Activated T-helper 1 cell treated with anti-CD3 and anti-CD28 coated beads, Interleukin-12 subunit alpha, Interleukin-12 subunit beta, Interleukin-2, Interleukin-4 antibody, amounts not matched to agents 30 ng/mL and 10 ng/mL and 1 ng/mL, durations not matched to agents 14 hours and 24 hours and 36 hours (primary cell): ENCODE measurements at regions of chr10 and their contacts with region 1.

Region 1: DNA sequence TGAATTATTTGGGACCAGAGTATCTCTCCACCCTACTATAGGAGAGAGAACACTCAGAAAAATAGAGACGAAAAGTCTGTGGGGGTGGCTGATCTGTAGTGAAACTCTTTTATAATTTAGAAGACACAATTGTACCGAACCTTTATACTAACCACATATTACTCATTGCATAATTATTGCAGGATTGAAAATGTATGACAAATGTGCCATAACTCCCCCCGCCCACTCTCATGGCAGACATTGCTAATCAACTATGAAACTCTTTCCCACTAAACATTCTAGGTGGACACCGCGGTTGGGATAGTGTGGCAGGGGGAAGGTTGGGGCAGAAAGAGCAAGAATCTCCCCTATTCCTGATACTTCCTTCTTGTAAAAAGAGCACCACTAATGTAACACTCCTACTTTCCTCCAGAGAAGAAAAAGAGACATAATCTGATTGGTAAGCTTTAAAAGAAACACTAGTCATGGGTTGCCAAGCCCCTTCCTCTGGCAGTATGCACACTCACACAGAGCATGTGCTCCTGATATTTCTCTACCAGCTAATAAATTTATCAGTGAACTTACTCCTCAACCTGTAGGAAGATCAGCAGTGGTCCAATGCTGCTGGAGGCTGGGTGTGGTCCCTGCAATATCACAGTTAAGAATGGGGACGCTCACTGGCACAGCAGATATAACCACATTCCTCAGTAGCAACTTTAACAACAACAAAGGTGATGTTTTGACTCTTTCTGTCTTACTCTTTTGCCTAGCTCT is 18.7 kb upstream of the ARID5B start:
- DNase-seq: no peak
- H3K4me3 Mint-ChIP-seq: no peak overlapping the region
- H3K27ac Mint-ChIP-seq: peak overlapping the region; percentile 44
- H3K4me1 Mint-ChIP-seq: peaks cover 19% of the 10 kb centered on the region
- H3K27me3 Mint-ChIP-seq: peaks cover 1% of the 10 kb centered on the region

Region 2: GRCh38 chr10:61750929-61751471 is 131.8 kb before region 1 on chr10:
- intact Hi-C with region 1: loop called (anchors 5 kb)
- DNase-seq: peak; percentile 53
- H3K4me3 Mint-ChIP-seq: no peak overlapping the region
- H3K27ac Mint-ChIP-seq: peak overlapping the region; percentile 35
- H3K4me1 Mint-ChIP-seq: peaks cover 23% of the 10 kb centered on the region
- H3K27me3 Mint-ChIP-seq: no peaks in the 10 kb centered on the region

Region 3: GRCh38 chr10:61765176-61766087 is 117.4 kb before region 1 on chr10:
- intact Hi-C with region 1: no loop called
- DNase-seq: no peak
- H3K4me3 Mint-ChIP-seq: no peak overlapping the region
- H3K27ac Mint-ChIP-seq: peak overlapping the region; percentile 18
- H3K4me1 Mint-ChIP-seq: peaks cover 16% of the 10 kb centered on the region
- H3K27me3 Mint-ChIP-seq: no peaks in the 10 kb centered on the region

Region 4: DNA sequence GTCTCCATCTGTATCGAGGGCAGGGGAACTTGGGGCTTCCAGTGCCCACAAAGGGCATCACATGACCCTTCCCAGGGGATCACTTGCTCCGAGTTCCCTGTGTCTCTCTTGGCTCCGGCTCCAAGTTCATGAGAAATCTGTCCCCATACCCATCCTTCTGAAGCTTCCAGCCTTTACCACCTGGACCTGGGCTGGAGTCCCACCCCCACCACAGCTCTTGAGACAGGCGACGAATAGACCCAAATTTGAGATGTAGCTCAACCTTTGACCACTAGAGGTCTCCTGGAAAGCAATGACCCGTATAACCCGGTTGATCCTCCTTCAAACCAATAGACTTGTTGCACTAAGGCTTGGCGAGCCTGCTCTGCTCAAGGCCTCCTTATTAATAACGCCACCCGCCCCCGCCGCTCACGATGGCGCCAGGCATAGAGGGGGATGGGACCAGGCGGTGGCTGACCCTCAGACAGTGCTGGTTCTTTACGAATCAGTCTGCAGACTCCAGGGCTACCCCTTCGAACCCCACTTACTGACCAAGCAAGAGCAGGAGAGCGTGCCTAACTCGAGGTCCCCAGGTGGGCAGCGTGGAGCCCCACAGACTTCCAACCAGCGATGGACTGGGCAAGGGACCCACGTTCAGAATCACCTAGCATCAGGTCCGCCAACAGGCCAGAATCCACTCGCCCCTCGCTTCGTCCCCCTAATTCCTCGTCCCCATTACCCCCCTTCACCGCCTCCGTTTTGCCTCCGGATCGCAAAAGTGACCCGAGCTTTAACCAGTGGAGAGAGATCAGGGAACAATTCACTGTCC is 14.3 kb after region 1 on chr10:
- intact Hi-C with region 1: loop called (anchors 1 kb)
- DNase-seq: peak; percentile 56
- H3K4me3 Mint-ChIP-seq: peak overlapping the region; percentile 87
- H3K27ac Mint-ChIP-seq: peak overlapping the region; percentile 90
- H3K4me1 Mint-ChIP-seq: peaks cover 38% of the 10 kb centered on the region
- H3K27me3 Mint-ChIP-seq: peaks cover 3% of the 10 kb centered on the region

Region 5: DNA sequence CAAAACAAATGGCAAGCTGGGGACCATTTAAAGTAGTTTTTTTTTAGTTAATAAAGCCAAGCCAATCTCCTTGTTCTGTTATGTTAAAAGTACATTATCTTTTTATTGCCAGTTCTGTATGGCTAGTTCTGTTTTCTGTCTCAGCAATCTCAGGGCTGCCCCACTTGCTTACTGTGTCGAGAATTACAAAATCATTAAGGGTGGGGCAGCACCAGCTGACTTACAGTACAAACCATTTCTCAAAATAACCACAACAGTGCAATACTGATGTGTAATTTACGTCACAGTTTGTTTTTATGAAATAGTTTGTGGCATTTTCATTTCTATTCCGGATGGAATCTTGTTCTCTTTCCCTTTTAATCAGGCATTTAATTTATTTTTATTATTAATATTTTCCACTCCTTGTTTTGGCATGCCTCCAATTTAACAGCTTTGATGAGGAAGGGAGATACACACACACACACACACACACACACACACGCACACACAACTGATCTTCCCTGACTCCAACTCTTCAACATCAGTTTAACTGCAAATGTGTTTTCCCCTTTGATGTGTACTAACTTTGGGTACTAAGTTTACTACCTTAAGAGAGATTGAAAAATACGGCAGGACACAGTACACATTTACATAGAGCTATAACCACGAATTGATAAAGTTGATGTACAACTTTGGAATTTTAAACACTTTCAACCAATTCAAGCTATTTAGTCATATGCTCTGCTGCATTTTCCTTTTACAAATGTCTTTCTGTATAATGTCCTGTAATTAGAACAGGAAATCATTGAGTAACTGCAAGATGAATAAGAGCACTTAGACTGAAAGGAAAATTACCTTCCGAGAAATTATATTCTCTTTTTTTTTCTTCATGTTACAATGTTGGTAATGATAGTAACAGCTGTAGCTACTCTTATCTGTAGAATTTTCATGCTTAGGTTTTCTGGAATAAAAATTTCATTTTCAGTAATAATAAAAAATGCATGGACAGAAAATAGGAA is 110.2 kb after region 1 on chr10:
- intact Hi-C with region 1: loop called (anchors 1 kb)
- DNase-seq: peak; percentile 69
- H3K4me3 Mint-ChIP-seq: peak overlapping the region; percentile 76
- H3K27ac Mint-ChIP-seq: peak overlapping the region; percentile 90
- H3K4me1 Mint-ChIP-seq: peaks cover 86% of the 10 kb centered on the region
- H3K27me3 Mint-ChIP-seq: no peaks in the 10 kb centered on the region